ENCODE measurements at regions of chr17 and their contacts with region 1.

Region 1: DNA sequence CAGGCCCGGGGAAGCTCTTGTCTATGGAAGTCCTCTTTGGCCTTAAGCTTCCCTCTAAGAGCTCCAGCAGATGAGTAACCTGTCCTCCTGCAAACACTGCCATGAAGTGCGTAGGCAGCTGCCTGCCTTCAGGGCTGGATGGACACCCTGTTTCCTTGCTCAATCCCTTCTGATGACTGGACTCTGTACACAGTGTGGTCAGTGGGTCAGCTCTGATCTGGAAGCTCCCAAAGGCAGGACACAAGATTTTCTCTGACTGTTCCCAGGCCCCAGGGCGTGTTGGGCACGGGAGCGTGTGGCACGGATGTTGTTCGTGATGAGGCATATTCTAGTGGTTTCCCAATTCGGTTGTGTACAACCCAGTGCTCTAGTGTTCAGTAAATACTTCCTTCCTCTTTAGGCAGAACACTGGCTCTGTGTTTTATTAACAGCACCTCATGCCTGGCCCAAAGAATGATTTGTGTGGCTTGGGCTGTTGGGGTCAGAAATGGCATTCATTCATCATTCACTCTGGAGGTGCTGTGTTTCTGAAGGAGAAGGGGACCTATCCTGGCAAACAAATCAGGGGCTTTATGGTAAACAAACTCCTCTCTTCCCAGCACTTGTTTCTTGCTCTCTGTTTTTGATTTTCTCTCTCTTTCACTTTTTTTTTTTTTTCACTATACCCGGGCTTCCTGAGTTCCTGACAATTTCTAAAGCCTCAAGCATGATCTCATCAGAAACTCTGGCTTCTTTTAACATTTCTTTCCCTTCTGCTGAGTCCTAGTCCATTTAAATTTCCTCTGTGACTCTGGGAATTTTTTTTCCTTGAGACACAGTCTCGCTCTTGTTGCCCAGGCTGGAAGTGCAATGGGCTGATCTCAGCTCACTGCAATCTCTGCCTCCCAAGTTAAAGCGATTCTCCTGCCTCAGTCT is 12.0 kb upstream of the RNF157 start:
- DNase-seq: peak; percentile 95 to 97
- ATAC-seq: peak; percentile 85 to 88
- H3K4me3 ChIP-seq: peak overlapping the region in 1 of 4 donors; percentile 4
- H3K27ac ChIP-seq: peak overlapping the region; percentile 90 to 97 (median 94)
- H3K4me1 ChIP-seq: peaks cover 49 to 52% of the 10 kb centered on the region in 2 donors
- H3K27me3 ChIP-seq: no peaks in the 10 kb centered on the region
- CTCF ChIP-seq: no peak
- POLR2A ChIP-seq: peak; percentile 60 to 72

Region 2: DNA sequence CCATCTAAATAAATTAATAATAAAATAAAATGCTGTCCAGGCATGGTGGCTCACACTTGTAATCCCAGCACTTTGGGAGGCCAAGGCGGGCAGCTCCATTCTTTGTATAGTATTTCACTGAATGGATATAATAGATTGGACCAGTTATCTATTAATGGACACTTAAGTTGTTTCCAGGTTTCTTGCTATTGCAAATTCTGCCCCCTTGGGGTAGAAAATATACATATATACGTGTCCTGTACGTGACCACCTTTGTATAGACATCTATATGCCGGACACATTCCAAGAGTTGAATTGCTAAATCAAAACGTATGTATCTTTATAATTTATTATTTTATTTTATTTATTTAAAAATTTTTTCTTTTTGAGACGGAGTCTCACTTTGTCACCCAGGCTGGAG is 144.8 kb before region 1 on chr17:
- in situ Hi-C with region 1: no loop called
- intact Hi-C with region 1: no loop called
- DNase-seq: no peak
- ATAC-seq: no peak
- H3K4me3 ChIP-seq: no peak overlapping the region
- H3K27ac ChIP-seq: no peak overlapping the region
- H3K4me1 ChIP-seq: peaks cover 10 to 14% of the 10 kb centered on the region in 2 donors
- H3K27me3 ChIP-seq: no peaks in the 10 kb centered on the region
- CTCF ChIP-seq: no peak
- POLR2A ChIP-seq: no peak

Region 3: GRCh38 chr17:76208120-76208519 is 44.2 kb before region 1 on chr17:
- in situ Hi-C with region 1: loop called in 1 of 4 experiments (anchors 5 kb)
- intact Hi-C with region 1: no loop called
- DNase-seq: no peak
- ATAC-seq: no peak
- H3K4me3 ChIP-seq: no peak overlapping the region
- H3K27ac ChIP-seq: peak overlapping the region; percentile 81 to 94 (median 86)
- H3K4me1 ChIP-seq: peaks cover 32 to 34% of the 10 kb centered on the region in 2 donors
- H3K27me3 ChIP-seq: no peaks in the 10 kb centered on the region
- CTCF ChIP-seq: no peak
- POLR2A ChIP-seq: no peak

Region 4: DNA sequence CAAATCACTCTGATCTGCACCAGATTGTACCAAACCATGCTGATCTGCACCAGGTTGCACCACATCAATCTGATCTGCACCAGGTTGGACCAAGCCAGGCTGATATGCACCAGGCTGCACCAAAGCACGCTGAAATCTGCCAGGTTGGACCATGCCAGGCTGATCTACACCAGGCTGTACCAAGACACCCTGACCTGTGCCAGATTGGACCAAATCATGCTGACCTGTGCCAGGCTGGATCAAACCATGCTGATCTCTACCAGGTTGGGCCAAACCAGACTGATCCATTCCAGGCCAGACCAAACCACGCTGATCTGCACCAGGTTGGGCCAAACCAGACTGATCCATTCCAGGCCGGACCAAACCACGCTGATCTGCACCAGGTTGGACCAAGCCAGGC is 40.3 kb after region 1 on chr17:
- in situ Hi-C with region 1: no loop called
- intact Hi-C with region 1: no loop called
- DNase-seq: no peak
- ATAC-seq: no peak
- H3K4me3 ChIP-seq: no peak overlapping the region
- H3K27ac ChIP-seq: no peak overlapping the region
- H3K4me1 ChIP-seq: no peaks in the 10 kb centered on the region
- H3K27me3 ChIP-seq: no peaks in the 10 kb centered on the region
- CTCF ChIP-seq: no peak
- POLR2A ChIP-seq: no peak